Caco-2 (cell line): ENCODE measurements at regions of chr3 and their contacts with region 1.

Region 1: GRCh38 chr3:4741404-4742307 is 237.6 kb upstream of the BHLHE40 start:
- DNase-seq: no peak
- H3K4me3 ChIP-seq: no peak overlapping the region
- H3K4me3 Mint-ChIP-seq: no peak overlapping the region
- H3K27ac Mint-ChIP-seq: no peak overlapping the region
- H3K4me1 ChIP-seq: peaks cover 36% of the 10 kb centered on the region
- H3K4me1 Mint-ChIP-seq: peaks cover 28% of the 10 kb centered on the region
- H3K27me3 ChIP-seq: no peaks in the 10 kb centered on the region
- H3K27me3 Mint-ChIP-seq: no peaks in the 10 kb centered on the region
- CTCF ChIP-seq: no peak

Region 2: DNA sequence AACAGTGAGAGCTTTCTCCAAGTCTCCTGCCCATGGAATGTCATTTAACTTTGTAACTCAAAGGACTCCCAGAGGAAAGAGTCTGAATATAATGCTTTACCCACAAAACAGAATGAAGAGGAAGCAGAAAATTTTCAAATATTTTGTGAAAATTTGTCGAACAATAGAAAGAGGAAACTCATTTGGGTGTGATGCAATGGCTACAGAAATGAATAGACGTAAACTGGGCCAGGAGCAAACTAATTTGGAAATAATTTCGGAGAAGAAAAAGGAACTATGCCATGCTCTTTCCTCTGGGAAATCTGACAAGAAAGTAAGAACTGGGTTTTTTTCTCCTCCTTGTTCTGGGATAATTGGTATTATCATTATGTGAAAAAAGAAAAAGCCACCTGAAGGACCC is 263.4 kb before region 1 on chr3:
- CTCF ChIA-PET with region 1: no interaction called
- POLR2A ChIA-PET with region 1: no interaction called
- intact Hi-C with region 1: no loop called
- DNase-seq: no peak
- H3K4me3 ChIP-seq: no peak overlapping the region
- H3K4me3 Mint-ChIP-seq: no peak overlapping the region
- H3K27ac Mint-ChIP-seq: no peak overlapping the region
- H3K4me1 ChIP-seq: no peaks in the 10 kb centered on the region
- H3K4me1 Mint-ChIP-seq: no peaks in the 10 kb centered on the region
- H3K27me3 ChIP-seq: no peaks in the 10 kb centered on the region
- H3K27me3 Mint-ChIP-seq: peaks cover 9% of the 10 kb centered on the region
- CTCF ChIP-seq: no peak

Region 3: GRCh38 chr3:4601892-4602291 is 139.8 kb before region 1 on chr3:
- CTCF ChIA-PET with region 1: no interaction called
- POLR2A ChIA-PET with region 1: no interaction called
- intact Hi-C with region 1: no loop called
- DNase-seq: no peak
- H3K4me3 ChIP-seq: no peak overlapping the region
- H3K4me3 Mint-ChIP-seq: no peak overlapping the region
- H3K27ac Mint-ChIP-seq: no peak overlapping the region
- H3K4me1 ChIP-seq: peaks cover 17% of the 10 kb centered on the region; the same call in 1 of the 2 replicates
- H3K4me1 Mint-ChIP-seq: peaks cover 9% of the 10 kb centered on the region
- H3K27me3 ChIP-seq: no peaks in the 10 kb centered on the region
- H3K27me3 Mint-ChIP-seq: peaks cover 2% of the 10 kb centered on the region
- CTCF ChIP-seq: no peak

Region 4: GRCh38 chr3:4758957-4759656 is 17.5 kb after region 1 on chr3:
- CTCF ChIA-PET with region 1: no interaction called
- POLR2A ChIA-PET with region 1: no interaction called
- intact Hi-C with region 1: loop called (anchors 1 kb)
- DNase-seq: no peak
- H3K4me3 ChIP-seq: no peak overlapping the region
- H3K4me3 Mint-ChIP-seq: peak overlapping the region; percentile 43
- H3K27ac Mint-ChIP-seq: peak overlapping the region; percentile 94
- H3K4me1 ChIP-seq: peaks cover 44% of the 10 kb centered on the region
- H3K4me1 Mint-ChIP-seq: peaks cover 20% of the 10 kb centered on the region
- H3K27me3 ChIP-seq: no peaks in the 10 kb centered on the region
- H3K27me3 Mint-ChIP-seq: no peaks in the 10 kb centered on the region
- CTCF ChIP-seq: no peak

Region 5: DNA sequence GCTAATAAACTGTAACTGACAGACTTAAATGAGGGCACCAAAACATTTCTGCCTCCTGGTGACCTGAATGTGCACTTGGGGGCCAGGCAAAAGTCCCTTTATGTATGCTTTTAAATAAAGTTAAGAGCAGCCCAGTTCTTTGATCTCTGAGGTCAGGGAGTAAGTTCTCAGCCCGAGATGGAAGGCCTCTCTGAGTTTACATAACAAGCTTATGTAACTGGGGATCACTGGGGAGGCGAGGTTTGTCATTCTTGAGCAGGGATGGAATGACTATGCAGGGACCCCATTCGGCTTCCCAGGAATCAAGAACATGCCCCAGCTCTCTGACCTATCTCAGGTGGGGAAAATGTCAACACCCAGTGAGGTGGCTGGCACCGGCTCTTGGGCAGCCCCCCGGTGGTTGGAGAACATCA is 38.9 kb after region 1 on chr3:
- CTCF ChIA-PET with region 1: interaction called, 4 read pairs
- POLR2A ChIA-PET with region 1: no interaction called
- intact Hi-C with region 1: loop called (anchors 1 kb)
- DNase-seq: peak in 1 of 2 experiments; percentile 20
- H3K4me3 ChIP-seq: no peak overlapping the region
- H3K4me3 Mint-ChIP-seq: no peak overlapping the region
- H3K27ac Mint-ChIP-seq: no peak overlapping the region
- H3K4me1 ChIP-seq: peaks cover 9% of the 10 kb centered on the region; the same call in 1 of the 2 replicates
- H3K4me1 Mint-ChIP-seq: peaks cover 7% of the 10 kb centered on the region
- H3K27me3 ChIP-seq: no peaks in the 10 kb centered on the region
- H3K27me3 Mint-ChIP-seq: no peaks in the 10 kb centered on the region
- CTCF ChIP-seq: no peak

Region 6: GRCh38 chr3:4807381-4808280 is 66.0 kb after region 1 on chr3:
- CTCF ChIA-PET with region 1: no interaction called
- POLR2A ChIA-PET with region 1: no interaction called
- intact Hi-C with region 1: no loop called
- DNase-seq: no peak
- H3K4me3 ChIP-seq: no peak overlapping the region
- H3K4me3 Mint-ChIP-seq: no peak overlapping the region
- H3K27ac Mint-ChIP-seq: no peak overlapping the region
- H3K4me1 ChIP-seq: peaks cover 14% of the 10 kb centered on the region; the same call in 1 of the 2 replicates
- H3K4me1 Mint-ChIP-seq: no peaks in the 10 kb centered on the region
- H3K27me3 ChIP-seq: no peaks in the 10 kb centered on the region
- H3K27me3 Mint-ChIP-seq: no peaks in the 10 kb centered on the region
- CTCF ChIP-seq: no peak